Endothelial cell of umbilical vein (primary cell): ENCODE measurements at regions of chr5 and their contacts with region 1.

Region 1: DNA sequence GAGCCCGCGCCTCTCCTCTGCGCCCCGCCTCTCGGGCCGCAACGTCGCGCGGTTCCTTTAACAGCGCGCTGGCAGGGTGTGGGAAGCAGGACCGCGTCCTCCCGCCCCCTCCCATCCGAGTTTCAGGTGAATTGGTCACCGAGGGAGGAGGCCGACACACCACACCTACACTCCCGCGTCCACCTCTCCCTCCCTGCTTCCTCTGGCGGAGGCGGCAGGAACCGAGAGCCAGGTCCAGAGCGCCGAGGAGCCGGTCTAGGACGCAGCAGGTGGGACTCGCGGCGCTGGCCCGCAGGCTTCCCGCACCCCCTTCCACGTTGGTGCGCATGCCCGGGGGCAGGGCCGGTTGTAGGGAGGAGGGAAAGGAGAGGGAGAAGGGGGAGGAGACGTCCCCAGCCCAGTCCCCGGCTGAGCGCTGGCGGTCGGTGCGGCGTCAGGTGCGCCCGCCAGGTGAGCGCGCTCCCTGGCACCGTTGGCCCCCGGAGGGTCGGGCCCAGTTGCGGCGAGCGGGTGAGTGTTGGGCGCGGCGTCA is at the start of gene OCLN:
- DNase-seq: peak; percentile 77
- H3K4me3 ChIP-seq: peak within 1 kb of the TSS; percentile 72 to 91 (median 87)
- H3K27ac ChIP-seq: no peak within 1 kb of the TSS
- H3K4me1 ChIP-seq: peaks cover 5% of the 10 kb centered on the region
- H3K27me3 ChIP-seq: peaks cover 2 to 21% of the 10 kb centered on the region in 2 experiments
- CTCF ChIP-seq: no peak
- POLR2A ChIP-seq: no peak
- total RNA-seq, gene OCLN: 18.2 and 22.3 TPM in 2 replicates

Region 2: DNA sequence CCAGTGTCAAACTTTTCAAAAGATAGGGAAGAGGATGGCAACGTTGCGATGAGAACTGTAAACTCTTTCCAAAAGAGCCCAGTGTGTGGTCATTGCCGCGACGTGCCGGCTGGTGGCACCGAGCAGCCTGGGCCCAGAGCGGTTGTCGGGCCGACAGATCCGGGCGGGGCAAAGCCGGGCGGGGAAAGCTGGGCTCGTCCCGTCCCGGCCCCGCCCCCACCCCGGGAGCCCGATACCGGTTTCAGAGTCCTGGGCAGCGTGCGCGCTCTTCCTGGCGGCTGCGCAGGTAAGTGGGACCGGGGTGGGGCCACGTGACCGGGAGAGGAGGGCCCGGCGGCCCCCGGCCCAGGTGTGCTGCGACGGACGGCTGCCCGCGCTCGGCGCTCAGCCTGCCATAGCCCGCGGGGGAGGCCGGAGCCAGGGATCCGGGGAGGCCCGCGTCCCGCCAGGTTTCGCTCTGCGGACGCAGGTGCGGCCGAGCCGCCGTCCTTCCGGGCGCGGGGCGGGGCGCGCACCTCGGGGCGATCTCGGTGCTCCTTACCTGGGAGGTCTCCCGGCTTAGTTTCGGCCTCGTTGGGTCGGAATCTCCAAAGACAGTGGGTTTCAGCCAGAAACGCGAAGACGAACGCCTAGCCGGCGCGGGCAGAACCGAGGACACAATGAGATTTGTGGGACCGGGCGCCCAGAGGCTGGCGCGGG is 77.4 kb before region 1 on chr5 and contains the start of gene MARVELD2:
- CTCF ChIA-PET with region 1: interaction called, 7 read pairs
- POLR2A ChIA-PET with region 1: no interaction called
- dilution Hi-C with region 1: no loop called
- intact Hi-C with region 1: loop called (anchors 2 kb)
- DNase-seq: peak; percentile 63
- H3K4me3 ChIP-seq: peak within 1 kb of the TSS; percentile 43 to 74 (median 64)
- H3K27ac ChIP-seq: no peak within 1 kb of the TSS
- H3K4me1 ChIP-seq: peaks cover 5% of the 10 kb centered on the region
- H3K27me3 ChIP-seq: no peaks in the 10 kb centered on the region
- CTCF ChIP-seq: peak; percentile 26 to 67
- POLR2A ChIP-seq: no peak
- total RNA-seq, gene MARVELD2: 6.7 and 7.1 TPM in 2 replicates

Region 3: GRCh38 chr5:69477170-69477569 is 15.3 kb before region 1 on chr5:
- CTCF ChIA-PET with region 1: no interaction called
- POLR2A ChIA-PET with region 1: no interaction called
- dilution Hi-C with region 1: no loop called
- intact Hi-C with region 1: loop called (anchors 2 kb)
- DNase-seq: peak; percentile 86
- H3K4me3 ChIP-seq: peak overlapping the region in 1 of 3 experiments; percentile 16
- H3K27ac ChIP-seq: peak overlapping the region; percentile 76
- H3K4me1 ChIP-seq: peaks cover 14% of the 10 kb centered on the region
- H3K27me3 ChIP-seq: no peaks in the 10 kb centered on the region
- CTCF ChIP-seq: no peak
- POLR2A ChIP-seq: no peak

Region 4: DNA sequence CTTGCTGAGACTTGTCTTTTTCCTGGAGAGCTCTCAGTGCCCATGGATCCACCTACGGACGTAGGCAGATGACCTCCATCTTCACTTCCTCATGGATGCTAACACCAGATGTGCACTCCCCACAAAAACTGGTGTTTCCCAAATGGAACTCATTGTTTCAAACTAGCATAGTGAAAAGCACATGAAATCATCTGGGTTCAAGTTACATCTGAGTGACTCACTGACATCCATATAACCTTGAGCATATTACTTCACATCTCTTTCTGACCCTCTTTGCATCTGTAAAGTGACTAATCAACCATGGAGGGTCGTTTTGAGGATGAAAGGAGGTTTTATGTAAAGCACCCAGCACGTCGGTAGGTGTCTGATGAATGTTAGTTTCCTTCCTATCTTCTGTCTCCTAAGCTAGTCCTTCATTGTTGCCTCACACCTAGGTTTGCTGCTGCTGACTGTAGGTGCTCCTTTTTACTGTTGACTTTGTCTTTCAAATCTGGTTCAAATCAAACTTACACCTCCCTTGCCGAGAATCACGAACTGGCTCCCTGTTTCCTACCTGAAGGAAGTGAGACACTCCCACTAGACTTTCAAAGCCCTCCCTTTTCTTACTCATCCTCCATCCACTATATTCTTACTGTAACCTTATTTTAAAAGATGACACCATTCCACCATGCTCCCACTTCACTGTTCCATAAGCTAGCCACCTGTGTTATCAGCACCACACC is 10.5 kb after region 1 on chr5:
- CTCF ChIA-PET with region 1: no interaction called
- POLR2A ChIA-PET with region 1: interaction called, 4 read pairs
- dilution Hi-C with region 1: no loop called
- intact Hi-C with region 1: loop called (anchors 1 kb)
- DNase-seq: peak; percentile 52
- H3K4me3 ChIP-seq: no peak overlapping the region
- H3K27ac ChIP-seq: peak overlapping the region; percentile 56
- H3K4me1 ChIP-seq: peaks cover 17% of the 10 kb centered on the region
- H3K27me3 ChIP-seq: no peaks in the 10 kb centered on the region
- CTCF ChIP-seq: no peak
- POLR2A ChIP-seq: no peak

Region 5: DNA sequence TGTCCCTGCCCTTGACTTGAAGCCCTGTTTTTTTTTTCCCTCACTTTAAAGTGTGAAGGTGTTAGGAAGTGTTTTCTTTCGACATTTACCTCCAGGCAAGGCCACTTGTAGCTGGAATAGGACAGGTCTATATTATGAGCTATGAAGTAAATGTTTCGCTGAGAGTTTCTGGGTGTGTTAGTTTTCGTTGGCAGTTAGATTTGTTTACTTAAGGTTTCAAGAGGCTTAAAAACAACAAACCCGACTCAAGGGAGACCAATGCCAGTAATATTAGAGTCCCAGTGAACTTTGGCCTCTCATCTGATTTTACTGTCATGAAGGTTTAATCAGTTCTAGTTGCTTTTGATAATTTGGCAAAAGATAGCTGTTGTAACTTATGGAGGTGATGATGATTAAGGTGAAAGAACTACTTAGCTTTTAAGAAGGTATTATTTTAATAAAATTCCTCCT is 25.3 kb after region 1 on chr5:
- CTCF ChIA-PET with region 1: no interaction called
- POLR2A ChIA-PET with region 1: no interaction called
- dilution Hi-C with region 1: no loop called
- intact Hi-C with region 1: loop called (anchors 1 kb)
- DNase-seq: peak; percentile 81
- H3K4me3 ChIP-seq: no peak overlapping the region
- H3K27ac ChIP-seq: no peak overlapping the region
- H3K4me1 ChIP-seq: peaks cover 31% of the 10 kb centered on the region
- H3K27me3 ChIP-seq: no peaks in the 10 kb centered on the region
- CTCF ChIP-seq: no peak
- POLR2A ChIP-seq: no peak